Heart left ventricle (tissue), 16 donors: ENCODE measurements at regions of chr15 and their contacts with region 1.

Region 1: GRCh38 chr15:59528965-59529402 is 82.6 kb upstream of the GCNT3 start:
- DNase-seq: peak; percentile 69 to 79 (median 79)
- ATAC-seq: peak; percentile 86 to 96 (median 94)
- H3K4me3 ChIP-seq: no peak overlapping the region
- H3K27ac ChIP-seq: no peak overlapping the region
- H3K4me1 ChIP-seq: peaks cover 0 to 25% (median 0%) of the 10 kb centered on the region in 12 donors
- H3K27me3 ChIP-seq: peaks cover 0 to 14% (median 0%) of the 10 kb centered on the region in 9 donors
- CTCF ChIP-seq: peak; percentile 72 to 85 (median 78)
- POLR2A ChIP-seq: no peak

Region 2: GRCh38 chr15:58980351-58980939 is 548.5 kb before region 1 on chr15:
- intact Hi-C with region 1: loop called in 1 of 10 experiments (anchors 1 kb)
- DNase-seq: no peak
- ATAC-seq: no peak
- H3K4me3 ChIP-seq: no peak overlapping the region
- H3K27ac ChIP-seq: peak overlapping the region in 1 of 12 donors; percentile 35
- H3K4me1 ChIP-seq: peaks cover 0 to 52% (median 0%) of the 10 kb centered on the region in 12 donors
- H3K27me3 ChIP-seq: no peaks in the 10 kb centered on the region
- CTCF ChIP-seq: peak; percentile 32 to 68 (median 55)
- POLR2A ChIP-seq: no peak

Region 3: DNA sequence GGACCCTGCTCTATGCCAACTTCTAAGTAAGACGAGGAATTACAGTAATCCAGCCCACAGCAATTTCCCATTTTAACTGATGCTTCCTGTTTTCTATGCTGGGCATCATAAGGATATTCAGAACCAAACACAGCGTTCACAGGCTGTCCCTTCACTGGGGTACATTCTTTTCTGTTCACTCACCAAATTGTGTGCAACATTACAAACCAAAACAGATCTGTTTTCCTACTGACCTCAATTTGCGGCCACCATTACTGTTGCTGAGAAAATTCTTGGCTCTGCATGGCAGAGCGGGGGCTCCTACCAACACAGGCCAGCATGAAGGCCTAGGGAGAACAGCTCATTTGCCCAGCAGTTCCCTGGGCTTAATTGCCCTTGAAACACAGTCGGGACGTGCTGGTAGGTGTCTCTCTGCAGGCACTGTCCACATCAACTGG is 232.8 kb before region 1 on chr15:
- intact Hi-C with region 1: no loop called
- DNase-seq: no peak
- ATAC-seq: peak in 1 of 4 donors; percentile 10
- H3K4me3 ChIP-seq: no peak overlapping the region
- H3K27ac ChIP-seq: peak overlapping the region in 8 of 12 donors; percentile 40 to 81 (median 52)
- H3K4me1 ChIP-seq: peaks cover 3 to 78% (median 33%) of the 10 kb centered on the region in 12 donors
- H3K27me3 ChIP-seq: no peaks in the 10 kb centered on the region
- CTCF ChIP-seq: no peak
- POLR2A ChIP-seq: no peak

Region 4: DNA sequence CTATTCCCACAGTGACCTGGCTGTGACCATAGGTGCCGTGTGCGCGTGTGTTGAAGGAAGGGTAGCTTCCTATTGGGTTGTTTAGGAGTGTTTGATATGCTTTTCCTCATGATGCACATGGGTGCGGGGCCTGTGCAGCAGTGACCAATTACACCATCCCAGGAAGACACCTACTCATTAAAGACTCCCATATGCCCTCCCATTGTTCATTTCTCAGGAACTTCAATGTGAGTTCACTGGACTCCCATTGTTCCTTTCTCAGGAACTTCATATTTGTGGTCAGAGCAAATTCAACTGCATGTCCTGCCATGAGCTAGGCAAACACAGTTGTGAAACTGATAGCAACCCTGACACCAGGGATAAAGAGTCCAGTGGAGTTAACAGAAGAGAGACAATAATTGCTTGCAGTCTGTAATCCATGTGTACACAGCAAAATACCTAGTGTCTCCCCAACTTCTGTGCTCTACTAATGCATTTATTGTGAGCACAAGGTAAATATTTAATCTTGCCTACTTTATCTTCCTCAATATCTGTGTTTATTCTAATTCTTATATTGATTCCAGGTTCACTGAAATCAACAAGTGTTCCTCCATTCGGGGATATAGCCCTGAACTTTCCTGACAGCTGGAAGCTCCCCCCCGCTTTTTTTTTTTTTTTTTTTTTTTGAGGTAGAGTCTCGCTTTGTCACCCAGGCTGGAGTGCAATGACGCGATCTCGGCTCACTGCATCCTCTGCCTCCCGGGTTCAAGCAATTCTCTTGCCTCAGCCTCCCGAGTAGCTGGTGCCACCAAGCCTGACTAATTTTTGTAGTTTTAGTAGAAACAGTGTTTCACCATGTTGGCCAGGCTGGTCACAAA is 25.1 kb after region 1 on chr15:
- intact Hi-C with region 1: no loop called
- DNase-seq: no peak
- ATAC-seq: no peak
- H3K4me3 ChIP-seq: no peak overlapping the region
- H3K27ac ChIP-seq: no peak overlapping the region
- H3K4me1 ChIP-seq: peaks cover 0 to 25% (median 0%) of the 10 kb centered on the region in 12 donors
- H3K27me3 ChIP-seq: no peaks in the 10 kb centered on the region
- CTCF ChIP-seq: no peak
- POLR2A ChIP-seq: no peak

Region 5: DNA sequence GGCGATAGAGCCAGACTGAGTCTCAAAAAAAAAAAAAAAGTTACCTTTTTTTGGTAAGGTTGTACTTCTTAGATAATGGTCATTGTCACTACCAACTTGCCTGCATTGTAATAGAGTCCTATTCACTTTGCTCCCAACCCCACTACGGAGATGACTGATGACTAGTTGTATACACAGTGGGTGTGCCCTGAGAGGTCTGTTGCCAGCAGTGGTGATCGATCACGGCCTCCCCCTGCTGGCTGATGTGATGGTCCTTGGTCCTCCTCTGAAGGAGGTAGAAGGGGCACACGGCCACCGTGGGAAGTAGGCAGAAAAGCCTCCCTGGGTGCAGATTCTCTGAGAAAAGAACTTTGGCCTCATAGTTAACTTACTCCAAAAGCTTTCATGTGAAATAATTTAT is 93.3 kb after region 1 on chr15:
- intact Hi-C with region 1: loop called in 1 of 10 experiments (anchors 10 kb)
- DNase-seq: no peak
- ATAC-seq: peak in 1 of 4 donors; percentile 31
- H3K4me3 ChIP-seq: no peak overlapping the region
- H3K27ac ChIP-seq: no peak overlapping the region
- H3K4me1 ChIP-seq: no peaks in the 10 kb centered on the region
- H3K27me3 ChIP-seq: peaks cover 0 to 29% (median 3%) of the 10 kb centered on the region in 9 donors
- CTCF ChIP-seq: peak in 1 of 12 donors; percentile 35
- POLR2A ChIP-seq: no peak

Region 6: DNA sequence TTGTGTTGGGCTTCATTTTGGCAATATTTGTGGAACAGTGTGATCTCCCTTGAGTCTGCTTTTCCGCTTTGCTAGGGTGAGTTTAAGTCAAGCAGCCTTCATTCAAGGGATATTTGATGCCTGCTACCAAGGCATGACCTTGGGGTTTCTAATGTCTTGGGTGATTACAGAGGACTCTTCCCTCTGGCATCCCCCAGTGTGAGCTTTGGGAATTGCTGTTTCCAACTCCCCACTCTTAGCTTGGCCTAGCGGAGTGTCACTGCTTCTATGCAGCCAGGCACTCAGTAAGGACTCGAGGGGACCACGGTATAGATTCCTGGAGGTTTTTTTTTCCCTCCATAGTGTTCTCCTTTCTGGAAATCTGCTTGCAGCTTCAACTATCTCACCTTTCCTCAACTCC is 103.7 kb after region 1 on chr15:
- intact Hi-C with region 1: loop called in 3 of 10 experiments (anchors 5 to 10 kb)
- DNase-seq: no peak
- ATAC-seq: no peak
- H3K4me3 ChIP-seq: no peak overlapping the region
- H3K27ac ChIP-seq: no peak overlapping the region
- H3K4me1 ChIP-seq: no peaks in the 10 kb centered on the region
- H3K27me3 ChIP-seq: no peaks in the 10 kb centered on the region
- CTCF ChIP-seq: no peak
- POLR2A ChIP-seq: no peak

Region 7: DNA sequence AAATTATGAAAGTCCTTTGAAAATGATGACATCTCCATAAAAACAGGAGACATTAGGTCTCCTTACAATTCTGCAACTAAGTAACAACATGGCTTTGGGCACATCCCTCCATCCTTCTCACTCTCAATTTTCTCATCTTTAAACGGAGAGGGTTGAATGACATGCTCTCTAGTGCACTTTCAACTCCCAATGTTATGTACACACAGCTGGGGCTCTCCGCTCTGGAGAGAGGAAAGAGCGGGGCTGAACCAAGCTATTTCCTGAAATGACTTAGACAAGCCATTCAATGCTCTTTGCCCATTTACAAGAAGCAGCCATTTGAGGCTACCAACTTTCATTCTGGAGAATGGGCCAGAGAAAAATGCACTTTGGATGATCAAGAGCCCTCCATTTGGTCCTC is 304.4 kb after region 1 on chr15:
- intact Hi-C with region 1: no loop called
- DNase-seq: no peak
- ATAC-seq: no peak
- H3K4me3 ChIP-seq: no peak overlapping the region
- H3K27ac ChIP-seq: no peak overlapping the region
- H3K4me1 ChIP-seq: no peaks in the 10 kb centered on the region
- H3K27me3 ChIP-seq: peaks cover 0 to 15% (median 0%) of the 10 kb centered on the region in 9 donors
- CTCF ChIP-seq: no peak
- POLR2A ChIP-seq: no peak

Region 8: DNA sequence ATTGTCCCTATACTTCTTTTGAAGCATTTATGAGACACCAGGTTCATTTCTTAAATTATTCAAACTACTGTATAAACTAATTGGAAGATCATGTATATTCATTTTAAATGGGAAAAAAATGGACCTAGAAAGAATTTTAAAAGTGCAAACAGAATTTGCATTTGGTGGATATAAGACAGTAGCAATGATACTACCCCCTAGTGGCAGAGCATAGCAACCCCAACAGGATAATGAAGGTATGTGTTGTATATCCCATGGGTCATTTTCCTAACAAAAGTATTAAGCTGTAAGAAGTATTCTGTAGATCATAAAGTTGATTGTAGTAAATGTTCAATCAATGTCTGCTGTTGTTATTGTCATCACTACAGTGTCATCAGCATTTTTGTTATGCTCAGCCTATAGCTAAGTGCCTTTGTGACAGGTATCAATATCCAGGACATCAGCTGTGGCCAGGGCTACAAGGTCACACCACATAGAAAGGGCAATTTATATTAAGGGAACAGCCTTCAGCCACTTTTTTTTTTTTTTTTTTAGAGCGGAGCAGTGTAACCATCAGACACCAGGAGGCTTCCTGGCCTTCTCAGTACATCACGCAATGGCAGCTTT is 650.9 kb after region 1 on chr15:
- intact Hi-C with region 1: loop called in 2 of 10 experiments (anchors 10 kb)
- DNase-seq: no peak
- ATAC-seq: no peak
- H3K4me3 ChIP-seq: no peak overlapping the region
- H3K27ac ChIP-seq: no peak overlapping the region
- H3K4me1 ChIP-seq: no peaks in the 10 kb centered on the region
- H3K27me3 ChIP-seq: peaks cover 0 to 16% (median 0%) of the 10 kb centered on the region in 9 donors
- CTCF ChIP-seq: peak; percentile 52 to 87 (median 68)
- POLR2A ChIP-seq: no peak